Lower leg skin (tissue), 4 donors: ENCODE measurements at regions of chr15 and their contacts with region 1.

Region 1: GRCh38 chr15:57146506-57147201 is 228.2 kb downstream of the TCF12 start:
- DNase-seq: no peak
- H3K4me3 ChIP-seq: no peak overlapping the region
- CTCF ChIP-seq: no peak
- POLR2A ChIP-seq: no peak

Region 2: GRCh38 chr15:57094321-57095257 is 52.1 kb before region 1 on chr15:
- intact Hi-C with region 1: loop called (anchors 1 kb)
- DNase-seq: no peak
- H3K4me3 ChIP-seq: no peak overlapping the region
- CTCF ChIP-seq: no peak
- POLR2A ChIP-seq: no peak

Region 3: GRCh38 chr15:57133127-57133968 is 13.3 kb before region 1 on chr15:
- intact Hi-C with region 1: no loop called
- DNase-seq: no peak
- H3K4me3 ChIP-seq: no peak overlapping the region
- CTCF ChIP-seq: no peak
- POLR2A ChIP-seq: no peak

Region 4: GRCh38 chr15:57306161-57306943 is 159.7 kb after region 1 on chr15:
- intact Hi-C with region 1: loop called (anchors 5 kb)
- DNase-seq: peak; percentile 78 to 97
- H3K4me3 ChIP-seq: peak overlapping the region; percentile 36
- CTCF ChIP-seq: peak in 1 of 3 donors; percentile 83
- POLR2A ChIP-seq: no peak